A673 (cell line): ENCODE measurements at regions of chr11 and their contacts with region 1.

Region 1: DNA sequence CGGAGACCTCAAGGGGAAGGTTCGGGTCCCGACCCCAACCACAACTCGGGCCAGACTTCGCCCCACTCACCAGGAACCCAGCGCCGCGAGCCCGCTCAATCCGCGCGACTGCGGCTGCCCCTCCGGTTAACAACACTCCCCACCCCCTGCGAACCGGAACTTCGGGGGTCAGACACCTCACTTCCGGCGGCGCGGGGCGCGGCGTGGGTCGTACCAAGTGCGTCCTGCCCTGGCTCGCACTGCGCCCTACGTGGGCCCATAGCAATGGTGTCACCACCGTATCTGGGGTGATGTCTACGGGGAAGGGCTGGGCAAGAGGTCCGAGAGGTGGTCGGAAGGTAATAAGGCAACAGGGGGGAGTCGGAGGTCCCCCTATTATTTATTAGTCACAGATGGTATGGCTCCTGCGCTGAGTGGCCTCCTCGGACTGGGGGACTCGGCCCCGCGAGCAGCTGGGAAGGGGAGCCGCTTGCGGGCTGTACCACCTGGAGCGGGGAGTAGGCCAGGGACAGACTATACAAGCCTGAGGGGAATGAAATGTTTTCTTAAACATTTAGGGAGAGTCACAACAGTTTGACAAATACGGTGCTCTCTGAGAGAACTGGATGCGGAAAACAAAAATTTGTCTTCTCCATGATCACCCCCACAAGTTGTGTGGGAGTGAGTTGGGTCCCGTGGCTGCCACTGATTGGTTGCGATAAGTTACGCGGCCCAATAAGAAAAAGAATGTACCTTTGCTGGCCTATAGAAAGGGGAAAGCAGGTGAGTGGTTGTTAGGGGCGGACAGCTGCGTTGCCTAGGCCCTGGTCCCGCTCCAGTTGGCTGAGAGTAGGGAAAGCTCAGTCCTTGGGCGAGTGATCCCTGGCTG is at the start of gene SYVN1:
- DNase-seq: peak; percentile 98
- H3K4me3 ChIP-seq: peak within 1 kb of the TSS; percentile 70
- H3K27ac ChIP-seq: peak within 1 kb of the TSS; percentile 99
- H3K4me1 ChIP-seq: peaks cover 17% of the 10 kb centered on the region
- H3K27me3 ChIP-seq: no peaks in the 10 kb centered on the region
- CTCF ChIP-seq: no peak
- total RNA-seq, gene SYVN1: 47.6 and 48.5 TPM in 2 replicates

Region 2: DNA sequence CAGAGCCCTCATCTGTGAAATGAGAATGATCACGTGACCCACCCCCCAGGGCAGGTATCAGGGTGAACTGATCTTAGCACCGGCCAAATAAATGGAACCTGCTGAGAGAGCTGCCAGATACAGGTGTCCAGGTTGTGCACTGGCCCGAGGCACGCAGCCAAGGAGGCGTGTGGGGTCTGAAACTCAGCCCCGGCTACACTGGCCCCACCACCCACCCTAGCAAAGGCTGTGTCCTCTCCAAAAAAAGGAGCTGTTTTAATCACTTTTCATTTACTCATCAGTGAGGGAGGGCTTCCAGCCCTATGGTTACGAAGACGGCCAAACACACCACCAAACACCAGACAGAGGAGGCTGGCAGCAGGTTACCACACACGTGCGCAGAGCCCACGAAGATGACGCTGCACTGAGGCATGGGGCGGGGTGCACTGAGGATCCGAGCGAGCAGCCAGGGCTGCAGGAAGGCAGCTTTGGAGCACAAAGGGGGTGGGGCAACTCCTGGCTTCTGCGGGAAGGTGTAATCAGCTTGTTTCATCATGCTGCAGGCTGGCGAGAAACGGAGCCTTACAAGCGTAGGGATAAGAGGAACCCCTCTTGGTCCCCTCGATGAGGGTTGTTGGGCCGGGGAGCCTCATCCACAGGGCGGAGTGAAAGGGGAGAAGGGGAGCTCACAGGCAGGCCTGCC is 563.1 kb before region 1 on chr11:
- CTCF ChIA-PET with region 1: no interaction called
- POLR2A ChIA-PET with region 1: interaction called, 22 read pairs
- intact Hi-C with region 1: no loop called
- DNase-seq: no peak
- H3K4me3 ChIP-seq: no peak overlapping the region
- H3K27ac ChIP-seq: no peak overlapping the region
- H3K4me1 ChIP-seq: peaks cover 4% of the 10 kb centered on the region
- H3K27me3 ChIP-seq: peaks cover 8% of the 10 kb centered on the region
- CTCF ChIP-seq: no peak